Heart right ventricle (tissue), 16 donors: ENCODE measurements at regions of chr13 and their contacts with region 1.

Region 1: DNA sequence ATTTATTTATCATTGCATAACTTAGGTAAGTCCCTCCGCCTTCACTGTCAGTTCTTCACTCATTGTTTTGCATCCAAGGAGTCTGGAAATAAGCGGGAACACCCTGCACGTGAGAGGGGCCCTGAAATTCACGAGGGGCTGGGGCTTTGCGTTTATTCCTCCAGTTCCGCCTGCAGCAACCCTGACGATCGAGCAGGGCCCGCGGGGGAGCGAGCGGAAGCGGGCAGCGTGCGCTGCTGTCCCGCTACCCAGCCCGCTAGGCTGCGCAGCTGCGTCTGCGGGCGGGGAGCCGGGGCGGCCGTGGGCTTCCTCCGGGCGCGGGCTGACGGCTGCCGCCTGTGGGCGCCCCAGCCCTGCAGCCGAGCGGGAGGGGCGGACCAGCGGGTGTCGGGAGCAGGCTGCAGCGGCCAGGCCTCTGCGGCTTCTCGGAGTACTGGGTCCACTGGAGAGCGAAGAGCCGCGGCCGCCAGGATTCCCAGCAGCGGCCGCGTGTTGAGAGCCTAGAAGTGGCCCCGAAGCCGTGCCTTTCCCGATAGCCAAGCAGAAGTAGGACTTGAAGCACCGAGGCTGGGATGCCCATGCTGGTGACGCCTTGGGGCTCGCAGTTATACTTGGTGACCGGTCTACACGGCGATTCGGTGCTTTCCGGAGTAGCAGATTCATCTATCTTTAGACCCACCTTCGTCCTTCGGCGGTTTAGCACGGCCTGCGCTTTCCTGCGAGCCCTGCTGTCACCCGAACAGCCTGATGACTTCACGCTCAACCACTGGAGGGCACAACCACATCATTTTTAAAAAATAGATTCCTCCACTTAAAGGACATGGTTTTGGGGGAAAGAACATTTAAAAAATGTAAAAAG is 32.9 kb upstream of the SACS start:
- DNase-seq: peak; percentile 74 to 78
- ATAC-seq: peak; percentile 93 to 96 (median 94)
- H3K4me3 ChIP-seq: peak overlapping the region; percentile 36 to 68 (median 60)
- H3K27ac ChIP-seq: peak overlapping the region; percentile 65 to 91 (median 83)
- H3K4me1 ChIP-seq: peaks cover 8 to 36% (median 15%) of the 10 kb centered on the region in 9 donors
- H3K27me3 ChIP-seq: no peaks in the 10 kb centered on the region
- CTCF ChIP-seq: peak; percentile 30 to 73 (median 60)

Region 2: GRCh38 chr13:23433171-23434153 is 32.9 kb before region 1 on chr13 and contains the start of gene SACS:
- intact Hi-C with region 1: no loop called
- DNase-seq: peak in 1 of 2 donors; percentile 18
- ATAC-seq: peak; percentile 72 to 90 (median 87)
- H3K4me3 ChIP-seq: peak within 1 kb of the TSS; percentile 37 to 72 (median 60)
- H3K27ac ChIP-seq: peak within 1 kb of the TSS in 8 of 10 donors; percentile 33 to 80 (median 62)
- H3K4me1 ChIP-seq: peaks cover 0 to 16% (median 7%) of the 10 kb centered on the region in 9 donors
- H3K27me3 ChIP-seq: peaks cover 0 to 9% (median 0%) of the 10 kb centered on the region in 7 donors
- CTCF ChIP-seq: no peak
- total RNA-seq, gene SACS: 7.2 to 44.5 (median 22.6) TPM

Region 3: GRCh38 chr13:23570099-23570920 is 103.9 kb after region 1 on chr13 and contains the start of gene TNFRSF19:
- intact Hi-C with region 1: loop called (anchors 2 to 10 kb)
- DNase-seq: peak; percentile 40 to 76
- ATAC-seq: peak; percentile 72 to 94 (median 84)
- H3K4me3 ChIP-seq: peak within 1 kb of the TSS; percentile 5 to 65 (median 48)
- H3K27ac ChIP-seq: peak within 1 kb of the TSS; percentile 67 to 87 (median 78)
- H3K4me1 ChIP-seq: peaks cover 0 to 18% (median 5%) of the 10 kb centered on the region in 9 donors
- H3K27me3 ChIP-seq: peaks cover 0 to 36% (median 0%) of the 10 kb centered on the region in 7 donors
- CTCF ChIP-seq: no peak
- total RNA-seq, gene TNFRSF19: 25.5 to 49.6 (median 33.7) TPM

Region 4: GRCh38 chr13:23579072-23579895 is 112.9 kb after region 1 on chr13:
- intact Hi-C with region 1: loop called in 4 of 10 experiments (anchors 5 to 10 kb)
- DNase-seq: peak; percentile 93 to 95
- ATAC-seq: peak; percentile 98 to 99 (median 99)
- H3K4me3 ChIP-seq: peak overlapping the region; percentile 54 to 98 (median 87)
- H3K27ac ChIP-seq: peak overlapping the region; percentile 72 to 97 (median 90)
- H3K4me1 ChIP-seq: peaks cover 0 to 65% (median 15%) of the 10 kb centered on the region in 9 donors
- H3K27me3 ChIP-seq: peaks cover 0 to 24% (median 0%) of the 10 kb centered on the region in 7 donors
- CTCF ChIP-seq: no peak

Region 5: DNA sequence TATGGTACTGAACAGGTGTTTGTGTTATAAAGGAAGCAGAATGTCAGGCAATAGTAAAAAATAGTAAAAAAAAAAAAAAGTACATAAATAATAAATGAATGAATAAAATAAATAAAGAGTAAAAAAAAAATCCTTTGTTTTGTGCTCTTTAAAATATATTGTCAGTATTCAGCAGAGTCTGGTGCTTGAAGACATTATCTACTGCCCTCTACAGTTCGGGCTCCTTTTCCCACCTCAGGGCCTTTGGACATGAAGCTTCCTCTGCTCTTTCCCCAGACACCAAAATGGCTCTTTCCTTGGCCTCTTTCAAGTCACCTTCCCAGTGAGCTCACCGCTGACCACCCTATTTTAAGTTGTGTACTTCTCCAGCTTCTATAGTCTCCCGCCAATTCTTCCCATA is 241.3 kb after region 1 on chr13:
- intact Hi-C with region 1: loop called in 3 of 10 experiments (anchors 5 to 10 kb)
- DNase-seq: no peak
- ATAC-seq: no peak
- H3K4me3 ChIP-seq: no peak overlapping the region
- H3K27ac ChIP-seq: no peak overlapping the region
- H3K4me1 ChIP-seq: peaks cover 0 to 25% (median 13%) of the 10 kb centered on the region in 9 donors
- H3K27me3 ChIP-seq: no peaks in the 10 kb centered on the region
- CTCF ChIP-seq: peak in 6 of 9 donors; percentile 23 to 40 (median 33)

Region 6: DNA sequence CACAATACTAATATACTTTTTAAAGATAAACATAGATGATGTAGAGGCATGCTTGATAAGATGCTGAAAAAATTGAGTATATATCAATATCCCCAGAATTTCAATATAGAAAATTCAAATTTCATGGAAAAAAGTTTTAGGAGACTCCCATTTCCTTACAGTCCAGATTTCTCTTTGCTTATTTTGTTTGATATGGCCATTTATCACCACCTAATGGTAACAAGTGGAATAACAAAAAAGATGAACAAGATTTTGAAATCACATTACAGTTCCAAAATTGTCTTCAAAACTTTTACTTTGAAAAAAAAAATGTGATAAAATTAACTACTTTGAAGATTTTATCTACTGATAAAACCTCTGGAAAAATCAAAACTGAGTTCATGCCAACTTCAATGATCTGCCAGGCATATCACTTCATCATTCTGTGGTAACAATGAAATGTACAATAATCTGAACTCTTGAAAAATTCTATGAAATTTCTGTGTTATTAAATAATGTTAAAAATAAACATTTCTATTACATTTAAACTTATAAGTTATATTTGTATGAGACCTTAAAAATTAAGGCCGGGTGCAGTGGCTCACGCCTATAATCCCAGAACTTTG is 405.3 kb after region 1 on chr13:
- intact Hi-C with region 1: loop called (anchors 1 to 10 kb)
- DNase-seq: no peak
- ATAC-seq: peak in 2 of 8 donors; percentile 35 to 44
- H3K4me3 ChIP-seq: no peak overlapping the region
- H3K27ac ChIP-seq: no peak overlapping the region
- H3K4me1 ChIP-seq: no peaks in the 10 kb centered on the region
- H3K27me3 ChIP-seq: no peaks in the 10 kb centered on the region
- CTCF ChIP-seq: peak; percentile 33 to 81 (median 62)

Region 7: GRCh38 chr13:23888658-23889614 is 422.6 kb after region 1 on chr13 and contains the start of gene MIPEP:
- intact Hi-C with region 1: loop called in 2 of 10 experiments (anchors 5 kb)
- DNase-seq: peak; percentile 92 to 94
- ATAC-seq: peak; percentile 99
- H3K4me3 ChIP-seq: peak within 1 kb of the TSS; percentile 70 to 100 (median 89)
- H3K27ac ChIP-seq: peak within 1 kb of the TSS; percentile 59 to 94 (median 86)
- H3K4me1 ChIP-seq: peaks cover 0 to 28% (median 11%) of the 10 kb centered on the region in 9 donors
- H3K27me3 ChIP-seq: no peaks in the 10 kb centered on the region
- CTCF ChIP-seq: peak; percentile 45 to 96 (median 78)
- total RNA-seq, gene MIPEP: 28.7 to 83.4 (median 47.3) TPM